ENCODE measurements at regions of chr5 and their contacts with region 1.

Region 1: DNA sequence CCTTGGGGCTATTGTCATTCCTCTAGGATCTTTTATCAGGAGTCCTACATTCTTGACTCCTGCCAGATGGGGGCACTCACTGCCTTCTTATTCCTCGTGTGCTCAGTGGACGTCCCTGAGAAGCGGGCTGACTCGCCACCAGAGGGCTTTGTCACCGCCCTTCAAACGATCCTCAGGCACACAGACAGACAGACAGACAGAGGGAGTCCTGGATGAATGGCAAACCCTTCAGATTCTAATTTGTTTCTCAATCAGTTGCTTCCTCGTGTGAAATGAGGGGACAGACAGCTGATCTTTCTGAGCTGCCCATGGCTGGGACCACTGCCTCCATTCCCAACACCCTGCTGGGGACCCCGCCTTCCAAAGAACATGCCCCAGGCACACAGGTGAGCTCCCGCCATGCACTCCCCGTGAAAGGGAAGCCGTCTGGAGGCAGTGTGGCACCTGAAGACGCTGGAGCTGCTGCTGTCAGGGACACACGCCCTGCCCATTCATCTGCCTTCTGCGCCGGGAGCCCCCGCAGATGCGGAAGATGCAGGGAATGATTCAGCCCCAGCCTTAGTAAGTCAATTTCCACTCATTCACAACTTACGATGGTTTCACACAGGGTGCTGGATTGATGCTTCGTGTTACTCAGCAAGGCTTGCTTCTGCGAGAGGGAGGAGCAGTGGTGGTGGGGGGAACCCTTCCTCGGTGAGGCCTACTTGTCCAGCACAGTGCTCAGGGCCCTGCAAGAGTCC is 24.9 kb upstream of the SH3PXD2B start:
- DNase-seq: peak; percentile 86
- ATAC-seq: peak; percentile 93
- H3K4me3 Mint-ChIP-seq: peak overlapping the region; percentile 18
- H3K27ac Mint-ChIP-seq: no peak overlapping the region
- H3K4me1 Mint-ChIP-seq: peaks cover 5% of the 10 kb centered on the region; the same call in 1 of the 2 replicates
- H3K27me3 Mint-ChIP-seq: peaks cover 11% of the 10 kb centered on the region
- CTCF ChIP-seq: peak; percentile 71

Region 2: DNA sequence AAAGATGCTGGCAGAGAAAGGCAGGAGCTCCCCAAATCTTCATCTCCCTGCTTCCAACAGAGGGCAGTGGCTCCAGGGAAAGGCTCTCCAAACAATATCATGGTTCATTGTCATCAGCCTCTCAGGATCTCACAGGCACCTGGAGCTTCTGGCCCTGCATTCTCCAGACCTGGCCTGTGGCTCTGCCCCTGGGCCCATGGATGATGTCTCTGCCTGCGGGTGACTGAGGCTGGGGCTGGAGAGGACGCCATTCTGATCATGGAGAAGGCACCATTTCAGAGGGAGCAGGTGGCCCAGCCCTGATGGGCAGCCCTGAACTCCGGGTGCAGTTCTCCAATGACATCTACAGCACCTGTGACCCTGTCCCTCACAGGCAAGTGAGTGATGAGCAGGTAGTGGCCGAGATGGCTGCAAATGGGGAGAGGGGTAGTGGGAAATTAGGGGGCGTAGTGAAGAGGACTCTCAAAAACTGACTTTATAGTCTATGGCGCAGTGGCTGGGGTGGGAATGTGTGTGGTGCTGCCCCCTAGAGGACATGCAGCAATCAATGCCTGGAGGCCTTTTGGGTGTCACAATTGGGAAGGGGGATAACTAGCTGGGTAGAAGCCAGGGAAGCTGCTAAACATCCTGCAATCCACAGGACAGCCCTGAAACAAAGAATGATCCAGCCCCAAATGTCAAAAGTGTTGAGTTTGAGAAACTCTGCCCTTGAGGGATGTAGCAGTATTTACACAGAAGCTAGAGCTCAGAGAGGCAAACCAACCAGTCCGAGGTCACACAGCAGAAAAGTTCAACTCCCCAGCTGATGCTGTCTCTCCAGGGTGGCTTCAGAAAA is 28.1 kb before region 1 on chr5:
- CTCF ChIA-PET with region 1: interaction called, 10 read pairs
- POLR2A ChIA-PET with region 1: no interaction called
- DNase-seq: peak; percentile 71
- ATAC-seq: peak; percentile 15
- H3K4me3 Mint-ChIP-seq: no peak overlapping the region
- H3K27ac Mint-ChIP-seq: no peak overlapping the region; the same call in 1 of the 2 replicates
- H3K4me1 Mint-ChIP-seq: peaks cover 70% of the 10 kb centered on the region
- H3K27me3 Mint-ChIP-seq: peaks cover 3% of the 10 kb centered on the region; the same call in 1 of the 2 replicates
- CTCF ChIP-seq: peak; percentile 82

Region 3: DNA sequence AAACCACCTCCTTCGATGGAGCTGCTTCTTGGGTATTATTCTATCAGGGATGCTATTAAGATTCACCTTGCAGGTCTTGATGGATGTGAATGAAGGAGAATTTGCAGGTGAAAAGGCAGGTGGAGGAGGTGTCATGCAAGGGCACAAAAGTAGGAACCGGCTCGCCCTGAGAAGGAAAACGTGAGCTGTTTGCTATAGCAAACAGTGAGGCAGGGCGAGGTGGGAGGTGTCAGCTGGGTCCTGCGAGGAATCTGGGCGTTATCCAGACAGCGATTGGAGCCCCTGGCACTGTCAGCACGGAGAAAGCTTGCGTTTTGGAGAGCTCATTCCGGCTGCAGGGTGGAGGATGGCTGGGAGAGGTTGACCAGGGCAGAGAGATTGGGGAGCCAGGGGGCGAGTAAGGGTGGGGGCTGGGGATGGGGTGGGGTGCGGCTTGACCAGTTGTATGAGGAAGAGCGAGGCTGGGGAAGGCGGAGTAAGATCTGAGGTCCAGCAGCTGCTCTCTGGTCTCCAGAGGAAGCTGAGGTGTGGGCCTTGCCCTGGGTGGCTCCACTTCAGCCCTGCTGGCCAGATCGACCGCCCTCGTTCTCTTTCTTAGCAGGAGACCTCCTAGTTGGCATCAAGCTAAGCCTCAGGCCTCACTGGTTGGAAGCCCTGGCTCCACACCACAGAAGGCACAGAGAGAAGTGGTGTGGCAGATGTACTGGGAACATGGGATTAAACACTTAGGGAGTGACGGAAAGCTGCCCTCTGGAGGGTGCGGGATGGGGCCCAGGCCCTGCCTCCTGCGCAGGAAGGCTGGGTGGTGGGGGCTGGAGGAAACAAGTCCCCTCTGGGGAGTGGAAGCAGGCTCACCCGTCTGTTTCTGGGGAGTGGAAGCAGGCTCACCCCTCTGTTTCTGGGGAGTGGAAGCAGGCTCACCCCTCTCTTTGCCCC is 107.2 kb after region 1 on chr5:
- CTCF ChIA-PET with region 1: interaction called, 10 read pairs
- POLR2A ChIA-PET with region 1: no interaction called
- DNase-seq: peak; percentile 67
- ATAC-seq: peak; percentile 89
- H3K4me3 Mint-ChIP-seq: peak overlapping the region; percentile 48
- H3K27ac Mint-ChIP-seq: peak overlapping the region; percentile 67
- H3K4me1 Mint-ChIP-seq: peaks cover 48% of the 10 kb centered on the region
- H3K27me3 Mint-ChIP-seq: peaks cover 36% of the 10 kb centered on the region
- CTCF ChIP-seq: no peak

Region 4: GRCh38 chr5:172646716-172647285 is 167.6 kb after region 1 on chr5:
- CTCF ChIA-PET with region 1: interaction called, 16 read pairs
- POLR2A ChIA-PET with region 1: no interaction called
- DNase-seq: peak; percentile 62
- ATAC-seq: peak; percentile 85
- H3K4me3 Mint-ChIP-seq: no peak overlapping the region; the same call in 1 of the 2 replicates
- H3K27ac Mint-ChIP-seq: peak overlapping the region; percentile 55; the same call in 1 of the 2 replicates
- H3K4me1 Mint-ChIP-seq: peaks cover 51% of the 10 kb centered on the region
- H3K27me3 Mint-ChIP-seq: peaks cover 17% of the 10 kb centered on the region
- CTCF ChIP-seq: peak; percentile 24; the same call in 1 of the 2 replicates

Region 5: DNA sequence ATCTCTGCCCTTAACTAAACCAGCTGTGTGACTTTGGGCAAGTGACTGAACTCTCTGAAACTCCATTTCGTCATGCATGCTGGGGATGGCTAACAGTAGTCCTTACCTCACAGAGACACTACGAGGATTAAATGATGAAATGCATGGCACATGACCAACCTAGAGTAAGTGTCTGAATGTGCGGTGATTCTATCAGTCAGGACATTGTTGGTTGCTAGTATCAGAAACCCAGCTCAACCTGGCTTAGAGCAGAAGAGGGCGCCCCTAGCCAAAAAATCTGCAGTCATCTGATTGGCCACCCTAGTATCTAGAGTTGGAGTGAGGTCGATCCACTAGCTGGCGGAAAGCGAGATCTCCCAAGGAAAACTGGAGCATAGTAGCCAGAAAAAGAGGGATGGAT is 187.0 kb after region 1 on chr5:
- CTCF ChIA-PET with region 1: interaction called, 23 read pairs
- POLR2A ChIA-PET with region 1: no interaction called
- DNase-seq: peak; percentile 55
- ATAC-seq: peak; percentile 90
- H3K4me3 Mint-ChIP-seq: no peak overlapping the region
- H3K27ac Mint-ChIP-seq: peak overlapping the region; percentile 48; the same call in 1 of the 2 replicates
- H3K4me1 Mint-ChIP-seq: peaks cover 2% of the 10 kb centered on the region
- H3K27me3 Mint-ChIP-seq: no peaks in the 10 kb centered on the region
- CTCF ChIP-seq: no peak

Region 6: DNA sequence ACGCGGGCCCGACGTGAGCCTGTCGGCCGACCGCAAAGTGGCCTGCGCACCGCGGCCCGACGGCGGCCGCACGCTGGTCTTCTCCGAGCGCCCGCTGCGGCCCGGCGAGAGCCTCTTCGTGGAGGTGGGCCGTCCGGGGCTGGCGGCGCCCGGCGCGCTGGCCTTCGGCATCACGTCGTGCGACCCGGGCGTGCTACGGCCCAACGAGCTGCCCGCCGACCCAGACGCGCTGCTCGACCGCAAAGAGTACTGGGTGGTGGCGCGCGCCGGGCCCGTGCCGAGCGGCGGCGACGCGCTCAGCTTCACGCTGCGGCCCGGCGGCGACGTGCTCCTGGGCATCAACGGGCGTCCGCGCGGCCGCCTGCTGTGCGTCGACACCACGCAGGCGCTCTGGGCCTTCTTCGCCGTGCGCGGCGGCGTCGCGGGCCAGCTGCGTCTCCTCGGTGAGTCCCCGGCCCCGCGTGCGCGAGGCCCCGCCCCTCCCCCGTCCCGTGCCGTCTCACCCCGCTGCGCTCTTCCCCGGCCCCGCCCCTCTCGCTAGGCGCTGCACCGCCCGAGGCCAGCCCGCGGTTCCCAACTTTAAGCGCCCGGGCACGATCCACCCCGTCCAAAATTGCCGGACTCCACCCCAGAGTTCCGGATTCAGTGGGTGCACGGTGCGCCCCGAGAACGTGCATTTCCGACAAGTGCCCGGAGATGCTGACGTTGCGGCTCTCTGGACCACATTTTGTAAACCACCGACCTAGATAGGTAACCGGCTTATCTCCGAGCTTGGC is 204.7 kb after region 1 on chr5:
- CTCF ChIA-PET with region 1: interaction called, 14 read pairs
- POLR2A ChIA-PET with region 1: no interaction called
- DNase-seq: peak; percentile 62
- ATAC-seq: peak; percentile 68
- H3K4me3 Mint-ChIP-seq: peak overlapping the region; percentile 62
- H3K27ac Mint-ChIP-seq: no peak overlapping the region
- H3K4me1 Mint-ChIP-seq: peaks cover 14% of the 10 kb centered on the region
- H3K27me3 Mint-ChIP-seq: peaks cover 30% of the 10 kb centered on the region
- CTCF ChIP-seq: no peak

Region 7: GRCh38 chr5:172697123-172698121 is 218.2 kb after region 1 on chr5:
- CTCF ChIA-PET with region 1: interaction called, 93 read pairs
- POLR2A ChIA-PET with region 1: no interaction called
- DNase-seq: peak; percentile 89
- ATAC-seq: peak; percentile 60
- H3K4me3 Mint-ChIP-seq: peak overlapping the region; percentile 66
- H3K27ac Mint-ChIP-seq: no peak overlapping the region
- H3K4me1 Mint-ChIP-seq: peaks cover 47% of the 10 kb centered on the region
- H3K27me3 Mint-ChIP-seq: peaks cover 32% of the 10 kb centered on the region
- CTCF ChIP-seq: peak; percentile 85